ENCODE measurements at regions of chr11 and their contacts with region 1.

Region 1: DNA sequence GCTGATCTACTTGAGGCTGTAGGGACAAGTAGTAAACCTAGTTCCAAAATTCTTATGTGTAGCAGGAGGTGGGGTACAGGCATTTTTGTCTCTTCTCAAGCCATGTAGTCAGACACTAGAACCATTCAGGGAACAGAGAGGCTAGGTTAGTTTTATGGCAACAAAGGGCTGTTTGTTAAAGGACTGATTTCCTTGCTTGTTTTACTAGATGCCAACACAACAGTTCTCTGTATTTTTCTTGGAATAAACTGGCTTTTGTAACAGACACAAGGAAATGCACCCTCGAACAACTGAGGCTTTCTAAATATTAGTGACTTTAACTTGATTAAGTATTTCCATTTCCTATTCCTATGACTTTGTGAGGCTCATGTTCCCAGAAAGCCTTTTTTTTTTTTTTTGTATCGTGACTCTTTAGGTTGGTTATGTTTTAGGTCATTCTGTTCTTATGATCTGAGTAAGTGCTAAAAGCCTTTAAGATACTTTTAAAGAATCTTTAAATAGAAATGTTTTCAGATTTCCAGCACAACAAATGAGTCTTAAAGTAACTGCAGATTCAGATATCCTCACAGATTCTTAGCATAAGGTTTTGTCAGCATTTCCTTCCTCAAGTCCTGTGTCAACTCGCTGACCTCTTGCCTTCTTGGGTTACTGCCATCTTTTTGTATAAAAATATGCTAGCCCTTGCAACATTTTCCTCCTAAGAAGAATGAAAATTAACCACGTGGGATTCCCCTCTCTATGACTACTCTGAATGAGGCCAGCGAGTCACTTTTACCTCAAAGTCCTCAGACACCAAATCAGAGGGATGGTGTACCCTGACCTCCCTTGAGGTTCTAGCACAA is 92.5 kb downstream of the CCDC83 start:
- DNase-seq: peak; percentile 62
- H3K4me3 Mint-ChIP-seq: peak overlapping the region; percentile 1
- H3K27ac Mint-ChIP-seq: peak overlapping the region; percentile 87
- H3K4me1 Mint-ChIP-seq: peaks cover 46% of the 10 kb centered on the region
- H3K27me3 Mint-ChIP-seq: no peaks in the 10 kb centered on the region

Region 2: GRCh38 chr11:85627998-85628770 is 319.5 kb before region 1 on chr11 and contains the start of gene TMEM126B:
- CTCF ChIA-PET with region 1: no interaction called
- intact Hi-C with region 1: loop called (anchors 1 kb)
- DNase-seq: peak; percentile 98
- H3K4me3 Mint-ChIP-seq: peak within 1 kb of the TSS; percentile 99
- H3K27ac Mint-ChIP-seq: peak within 1 kb of the TSS; percentile 96
- H3K4me1 Mint-ChIP-seq: peaks cover 33% of the 10 kb centered on the region
- H3K27me3 Mint-ChIP-seq: no peaks in the 10 kb centered on the region
- total RNA-seq, gene TMEM126B: 72.6 to 79.0 TPM

Region 3: DNA sequence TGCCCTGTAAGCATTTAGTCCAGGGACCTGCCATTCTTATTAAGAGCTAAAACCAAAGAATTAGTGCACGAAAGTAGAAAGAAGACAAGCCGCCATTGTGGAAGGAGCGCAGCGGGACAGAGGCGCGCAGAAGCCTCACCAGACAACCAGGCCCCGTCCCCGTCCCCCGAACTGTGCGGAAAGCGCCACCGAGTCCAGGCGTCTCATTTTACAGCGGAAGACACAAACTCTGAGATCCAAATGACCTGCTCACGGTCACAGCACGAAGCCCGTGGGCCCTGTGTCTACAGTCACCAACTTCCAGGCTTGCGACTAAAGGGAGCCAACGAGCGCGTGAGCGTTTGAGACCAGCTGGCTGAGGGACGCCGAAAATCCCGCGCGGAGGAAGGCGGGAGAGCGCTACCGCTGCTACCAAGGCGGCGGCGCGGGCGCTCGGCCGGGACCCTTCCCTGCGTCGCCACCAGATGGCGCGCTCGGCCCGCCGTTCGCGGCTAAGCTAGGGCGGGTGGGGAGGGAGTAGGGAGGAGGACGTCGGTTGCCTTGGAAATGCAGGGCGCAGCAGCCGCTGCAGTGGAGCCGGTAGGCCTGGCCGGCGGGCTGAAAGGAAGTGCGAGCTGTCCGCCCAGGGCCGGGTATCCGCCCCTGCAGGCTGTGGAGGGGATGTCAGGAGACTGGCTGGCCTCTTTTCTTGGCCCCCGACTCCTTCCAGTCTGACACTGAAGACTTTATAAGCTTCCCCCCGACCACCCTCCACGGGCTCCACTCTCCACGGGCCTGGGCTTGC is 92.9 kb before region 1 on chr11:
- CTCF ChIA-PET with region 1: interaction called, 3 read pairs
- intact Hi-C with region 1: loop called (anchors 2 kb)
- DNase-seq: peak; percentile 92
- H3K4me3 Mint-ChIP-seq: peak overlapping the region; percentile 88
- H3K27ac Mint-ChIP-seq: peak overlapping the region; percentile 89
- H3K4me1 Mint-ChIP-seq: peaks cover 7% of the 10 kb centered on the region
- H3K27me3 Mint-ChIP-seq: no peaks in the 10 kb centered on the region

Region 4: GRCh38 chr11:85922367-85922766 is 25.3 kb before region 1 on chr11:
- CTCF ChIA-PET with region 1: no interaction called
- intact Hi-C with region 1: no loop called
- DNase-seq: no peak
- H3K4me3 Mint-ChIP-seq: no peak overlapping the region
- H3K27ac Mint-ChIP-seq: no peak overlapping the region
- H3K4me1 Mint-ChIP-seq: peaks cover 7% of the 10 kb centered on the region
- H3K27me3 Mint-ChIP-seq: peaks cover 22% of the 10 kb centered on the region

Region 5: GRCh38 chr11:86116386-86116726 is 168.7 kb after region 1 on chr11:
- CTCF ChIA-PET with region 1: interaction called, 4 read pairs
- intact Hi-C with region 1: loop called (anchors 2 kb)
- DNase-seq: peak; percentile 57
- H3K4me3 Mint-ChIP-seq: no peak overlapping the region
- H3K27ac Mint-ChIP-seq: peak overlapping the region; percentile 17
- H3K4me1 Mint-ChIP-seq: peaks cover 28% of the 10 kb centered on the region
- H3K27me3 Mint-ChIP-seq: peaks cover 5% of the 10 kb centered on the region

Region 6: GRCh38 chr11:86218125-86219084 is 270.8 kb after region 1 on chr11:
- CTCF ChIA-PET with region 1: interaction called, 4 read pairs
- intact Hi-C with region 1: loop called (anchors 1 kb)
- DNase-seq: peak; percentile 80
- H3K4me3 Mint-ChIP-seq: peak overlapping the region; percentile 14
- H3K27ac Mint-ChIP-seq: peak overlapping the region; percentile 90
- H3K4me1 Mint-ChIP-seq: peaks cover 82% of the 10 kb centered on the region
- H3K27me3 Mint-ChIP-seq: peaks cover 3% of the 10 kb centered on the region

Region 7: DNA sequence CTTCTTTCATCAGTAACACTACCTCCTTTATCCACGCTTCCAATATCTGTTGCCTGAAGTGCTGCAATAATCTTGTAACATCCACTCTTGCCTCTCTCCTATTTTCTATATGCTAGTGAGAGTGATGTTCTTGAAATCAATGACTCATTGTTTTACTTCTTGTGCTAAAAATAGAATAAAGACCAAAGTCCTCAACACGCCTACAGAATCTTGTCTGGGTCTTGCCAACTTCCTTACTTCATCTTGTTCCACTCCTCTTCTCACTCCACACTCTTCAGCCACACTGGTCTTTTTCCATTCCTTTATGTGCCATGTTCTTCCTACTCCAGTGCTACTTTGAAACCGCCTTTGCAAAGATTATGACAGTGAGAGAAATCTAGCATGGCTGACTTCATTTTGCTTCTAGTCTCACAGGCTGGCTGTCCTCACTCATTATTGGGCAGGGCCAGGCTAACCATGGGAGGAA is 563.5 kb after region 1 on chr11:
- CTCF ChIA-PET with region 1: no interaction called
- intact Hi-C with region 1: loop called (anchors 1 kb)
- DNase-seq: peak; percentile 10
- H3K4me3 Mint-ChIP-seq: no peak overlapping the region
- H3K27ac Mint-ChIP-seq: no peak overlapping the region
- H3K4me1 Mint-ChIP-seq: peaks cover 8% of the 10 kb centered on the region
- H3K27me3 Mint-ChIP-seq: no peaks in the 10 kb centered on the region